ENCODE measurements at regions of chr5 and their contacts with region 1.

Region 1: GRCh38 chr5:142548739-142549275 is 137.1 kb downstream of the FGF1 start:
- DNase-seq: peak in 1 of 2 donors; percentile 53
- ATAC-seq: peak; percentile 86
- H3K4me3 ChIP-seq: no peak overlapping the region
- H3K27ac ChIP-seq: no peak overlapping the region
- H3K4me1 ChIP-seq: no peaks in the 10 kb centered on the region
- H3K27me3 ChIP-seq: no peaks in the 10 kb centered on the region

Region 2: GRCh38 chr5:142151436-142152383 is 397.1 kb before region 1 on chr5:
- intact Hi-C with region 1: loop called (anchors 5 kb)
- DNase-seq: peak in 1 of 2 donors; percentile 52
- ATAC-seq: peak; percentile 76
- H3K4me3 ChIP-seq: no peak overlapping the region
- H3K27ac ChIP-seq: no peak overlapping the region
- H3K4me1 ChIP-seq: no peaks in the 10 kb centered on the region
- H3K27me3 ChIP-seq: no peaks in the 10 kb centered on the region

Region 3: GRCh38 chr5:142324871-142325724 is 223.7 kb before region 1 on chr5 and contains the start of gene SPRY4:
- intact Hi-C with region 1: loop called (anchors 5 kb)
- DNase-seq: peak; percentile 95 to 98
- ATAC-seq: peak; percentile 91
- H3K4me3 ChIP-seq: peak within 1 kb of the TSS; percentile 72 to 90
- H3K27ac ChIP-seq: peak within 1 kb of the TSS; percentile 85 to 99
- H3K4me1 ChIP-seq: peaks cover 0 to 11% of the 10 kb centered on the region in 2 donors
- H3K27me3 ChIP-seq: no peaks in the 10 kb centered on the region
- total RNA-seq, gene SPRY4: 49.8 to 67.9 TPM

Region 4: GRCh38 chr5:142356716-142357473 is 191.9 kb before region 1 on chr5:
- intact Hi-C with region 1: loop called (anchors 10 kb)
- DNase-seq: peak; percentile 92 to 94
- ATAC-seq: peak; percentile 90
- H3K4me3 ChIP-seq: peak overlapping the region; percentile 57 to 92
- H3K27ac ChIP-seq: peak overlapping the region; percentile 92 to 97
- H3K4me1 ChIP-seq: no peaks in the 10 kb centered on the region
- H3K27me3 ChIP-seq: no peaks in the 10 kb centered on the region

Region 5: GRCh38 chr5:142364251-142365145 is 184.3 kb before region 1 on chr5:
- intact Hi-C with region 1: loop called (anchors 10 kb)
- DNase-seq: no peak
- ATAC-seq: no peak
- H3K4me3 ChIP-seq: no peak overlapping the region
- H3K27ac ChIP-seq: no peak overlapping the region
- H3K4me1 ChIP-seq: peaks cover 0 to 2% of the 10 kb centered on the region in 2 donors
- H3K27me3 ChIP-seq: no peaks in the 10 kb centered on the region

Measured in aorta (tissue), 5 donors.